ENCODE measurements at regions of chr22 and their contacts with region 1.

Region 1: DNA sequence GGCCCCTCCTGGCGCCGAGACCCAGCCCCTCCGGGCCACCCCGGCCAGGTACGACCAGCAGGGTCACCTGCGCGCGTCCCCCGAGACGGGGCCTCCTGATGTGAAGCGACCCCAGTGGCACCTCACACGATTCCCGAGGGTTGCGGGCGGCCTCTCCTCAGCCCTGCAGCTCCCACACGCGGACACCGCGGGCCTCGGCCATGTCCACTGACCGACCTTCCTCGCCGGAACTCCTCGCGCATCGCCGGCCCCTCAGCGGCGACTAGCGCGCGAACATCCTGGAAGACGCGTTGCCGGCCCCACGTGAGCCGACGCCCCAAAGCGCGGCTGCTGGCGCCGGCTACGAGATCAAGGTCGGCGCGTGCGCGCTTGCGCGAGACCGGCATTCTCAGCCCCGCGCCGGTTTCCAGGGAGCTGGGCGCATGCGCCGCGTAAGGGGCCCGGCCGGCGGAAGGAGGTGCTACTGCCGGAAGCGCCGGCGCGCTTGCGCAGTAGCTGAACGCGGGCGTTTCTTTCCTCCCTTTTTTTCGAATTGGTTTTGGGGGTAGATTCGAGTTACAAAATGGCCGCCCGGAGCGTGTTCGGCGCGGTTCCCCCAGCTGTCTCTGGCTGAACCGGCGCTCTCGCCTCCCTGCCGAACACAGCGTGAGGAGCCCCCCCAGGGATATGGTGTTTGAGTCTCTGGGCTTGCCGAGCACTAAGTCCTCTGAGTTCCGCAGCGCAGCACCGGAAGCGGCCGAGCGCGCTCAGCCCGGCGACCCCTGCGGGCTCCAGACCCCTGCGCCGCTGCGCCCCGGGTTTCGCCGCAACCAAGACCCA is at the start of gene NUP50:
- DNase-seq: peak; percentile 81 to 94 (median 87)
- H3K4me3 ChIP-seq: peak within 1 kb of the TSS; percentile 56 to 100 (median 86)
- H3K27ac ChIP-seq: peak within 1 kb of the TSS in 56 of 59 donors; percentile 13 to 92 (median 78)
- H3K27me3 ChIP-seq: no peaks in the 10 kb centered on the region
- CTCF ChIP-seq: peak in 36 of 56 donors; percentile 9 to 63 (median 34)
- total RNA-seq, gene NUP50: 27.1 to 82.5 (median 51.9) TPM

Region 2: DNA sequence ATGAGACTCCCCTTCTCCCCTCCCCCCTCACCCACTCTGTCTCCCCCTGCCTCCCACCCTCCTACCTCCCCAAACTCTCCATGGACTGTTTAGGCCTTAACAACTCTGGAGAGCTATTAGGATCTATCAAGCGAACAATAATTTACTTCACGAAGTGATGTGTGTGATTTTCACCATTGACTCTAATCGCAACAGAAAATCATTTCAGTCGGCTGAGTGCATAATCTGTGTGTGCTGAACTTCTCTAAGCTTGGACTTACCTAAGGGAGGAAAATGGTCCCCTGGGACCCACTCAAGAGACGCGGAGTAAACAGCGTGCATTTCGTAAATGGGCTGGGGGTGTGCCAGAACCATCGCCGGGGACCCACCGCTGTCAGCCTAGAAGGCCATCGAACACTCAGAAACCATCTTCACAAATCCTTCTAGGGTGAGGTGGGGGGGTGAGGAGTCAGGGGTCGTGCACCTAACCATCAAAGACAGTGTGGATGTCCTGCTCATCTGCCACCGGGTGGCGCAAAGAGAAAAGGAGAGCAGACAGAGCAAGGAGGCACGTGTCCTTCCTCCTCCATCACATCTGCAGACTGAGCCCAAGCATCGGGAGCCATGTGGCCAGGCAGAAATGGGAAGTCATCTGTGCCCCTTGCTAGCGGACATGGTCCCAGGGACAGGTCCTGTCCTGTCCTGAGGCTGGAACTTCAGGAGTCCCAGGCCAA is 62.0 kb before region 1 on chr22:
- intact Hi-C with region 1: loop called in 1 of 2 experiments (anchors 5 kb)
- DNase-seq: peak in 7 of 10 donors; percentile 11 to 70 (median 52)
- H3K4me3 ChIP-seq: no peak overlapping the region
- H3K27ac ChIP-seq: no peak overlapping the region
- H3K27me3 ChIP-seq: peaks cover 0 to 21% (median 2%) of the 10 kb centered on the region in 45 donors
- CTCF ChIP-seq: peak in 52 of 56 donors; percentile 22 to 77 (median 54)

Region 3: DNA sequence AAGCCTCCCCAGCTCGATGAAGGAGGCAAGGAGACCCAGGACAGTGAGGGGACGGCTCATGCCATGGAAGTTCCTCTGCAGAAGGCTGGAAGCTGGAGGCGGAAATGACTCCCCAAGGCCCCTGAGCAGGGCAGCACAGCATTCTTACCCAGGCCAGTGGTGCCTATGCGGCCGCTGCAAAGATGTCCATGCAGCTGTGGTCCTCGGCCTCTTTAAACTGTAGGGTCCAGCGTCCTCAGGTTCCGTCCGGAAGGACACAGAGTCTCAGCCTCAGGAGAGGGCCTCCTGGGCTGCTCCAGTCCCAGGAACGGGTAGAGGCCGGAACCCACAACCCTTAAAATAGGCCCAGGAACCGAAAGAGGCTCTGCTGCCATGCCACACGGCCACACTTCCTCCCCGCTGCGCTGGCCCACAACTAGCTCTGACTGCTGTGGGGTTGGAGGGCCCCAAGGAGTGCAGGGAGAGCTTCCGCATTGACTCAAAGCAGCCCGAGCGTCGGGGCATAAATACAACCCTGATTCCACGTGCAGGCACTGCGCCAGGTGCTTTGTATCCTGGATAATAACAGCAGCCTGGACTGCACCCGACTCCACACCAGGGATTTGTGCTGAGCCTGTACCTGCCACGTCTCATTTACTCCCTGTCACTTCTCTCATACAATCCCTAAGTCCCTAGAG is 71.6 kb after region 1 on chr22:
- intact Hi-C with region 1: loop called (anchors 10 kb)
- DNase-seq: no peak
- H3K4me3 ChIP-seq: peak overlapping the region in 14 of 59 donors; percentile 1 to 33 (median 17)
- H3K27ac ChIP-seq: peak overlapping the region in 55 of 59 donors; percentile 25 to 89 (median 68)
- H3K27me3 ChIP-seq: no peaks in the 10 kb centered on the region
- CTCF ChIP-seq: no peak

Region 4: GRCh38 chr22:45268958-45269844 is 105.5 kb after region 1 on chr22:
- intact Hi-C with region 1: loop called in 1 of 2 experiments (anchors 10 kb)
- DNase-seq: peak in 9 of 10 donors; percentile 64 to 91 (median 77)
- H3K4me3 ChIP-seq: peak overlapping the region; percentile 26 to 80 (median 69)
- H3K27ac ChIP-seq: peak overlapping the region in 29 of 59 donors; percentile 2 to 75 (median 39)
- H3K27me3 ChIP-seq: no peaks in the 10 kb centered on the region
- CTCF ChIP-seq: peak; percentile 66 to 99 (median 90)

Region 5: GRCh38 chr22:45424231-45424731 is 260.6 kb after region 1 on chr22:
- intact Hi-C with region 1: loop called in 1 of 2 experiments (anchors 10 kb)
- DNase-seq: peak in 2 of 10 donors; percentile 24 to 31
- H3K4me3 ChIP-seq: no peak overlapping the region
- H3K27ac ChIP-seq: no peak overlapping the region
- H3K27me3 ChIP-seq: no peaks in the 10 kb centered on the region
- CTCF ChIP-seq: no peak

Measured in dorsolateral prefrontal cortex (tissue), 120 donors.